ENCODE measurements at regions of chr17 and their contacts with region 1.

Region 1: DNA sequence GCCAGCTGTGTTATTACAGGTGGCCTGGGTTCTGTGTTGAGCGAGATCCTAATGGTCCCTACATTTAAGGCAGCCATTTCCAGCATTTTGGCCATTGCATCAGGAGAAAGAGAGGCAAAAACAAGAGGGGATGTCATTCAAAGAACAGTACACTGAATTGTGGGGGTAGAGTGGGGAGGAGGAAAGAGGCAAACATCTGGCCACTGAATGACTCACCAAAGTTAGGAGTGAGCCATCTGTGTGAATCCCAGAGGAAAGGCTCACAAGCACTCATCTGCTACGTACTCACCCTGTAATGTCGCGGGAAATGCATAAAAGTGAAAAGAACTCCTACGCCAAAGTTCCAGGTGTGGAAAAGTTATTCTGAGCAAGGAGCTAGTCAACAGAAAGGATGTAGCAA is 16.7 kb downstream of the KRABD2 start:
- DNase-seq: no peak
- ATAC-seq: peak; percentile 87

Region 2: GRCh38 chr17:8314797-8315763 is 44.7 kb before region 1 on chr17:
- intact Hi-C with region 1: loop called (anchors 2 kb)
- DNase-seq: no peak
- ATAC-seq: no peak

Region 3: DNA sequence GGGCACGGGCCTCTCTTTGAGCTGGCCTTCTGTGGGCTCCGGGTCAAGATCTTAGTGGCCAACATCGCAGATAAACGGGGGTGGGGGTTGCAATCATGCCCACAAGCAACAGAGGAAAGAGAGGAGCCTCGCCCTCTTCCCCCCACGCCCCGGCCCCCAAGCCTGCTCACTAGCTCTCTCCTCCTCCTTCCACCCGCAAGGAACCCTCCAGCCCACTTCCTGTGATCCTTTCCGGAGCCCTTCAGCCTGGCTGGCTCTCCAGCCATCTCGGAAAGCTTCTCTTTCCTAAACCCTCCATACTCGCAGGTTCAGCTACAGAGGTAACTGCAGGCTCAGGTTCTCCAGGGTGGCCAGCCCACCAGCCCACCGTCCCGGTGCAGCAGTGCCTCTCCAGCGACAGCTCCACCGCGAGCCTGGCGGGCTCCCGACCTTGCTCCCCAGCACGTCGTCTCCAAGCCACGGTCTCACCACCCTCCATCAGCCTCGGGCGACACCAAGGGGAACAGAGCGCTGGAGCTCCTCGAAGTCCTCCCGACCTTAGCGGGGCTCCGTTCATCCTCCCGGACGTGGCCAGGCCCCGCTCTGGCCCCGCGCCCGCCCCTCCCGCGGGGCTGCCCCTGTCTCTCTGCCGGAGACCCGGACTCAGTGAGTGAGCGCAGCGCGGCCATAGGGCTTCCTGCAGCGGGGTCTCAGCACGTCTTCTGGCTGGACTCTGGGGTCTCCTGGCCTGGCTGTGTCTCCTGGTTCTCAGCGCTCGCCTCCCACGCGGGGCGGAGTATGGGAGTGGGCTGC is 33.1 kb before region 1 on chr17:
- intact Hi-C with region 1: loop called (anchors 5 kb)
- DNase-seq: no peak
- ATAC-seq: peak; percentile 71

Region 4: GRCh38 chr17:8503368-8503767 is 143.6 kb after region 1 on chr17:
- intact Hi-C with region 1: no loop called
- DNase-seq: no peak
- ATAC-seq: peak; percentile 54